ENCODE measurements at regions of chr15 and their contacts with region 1.

Region 1: GRCh38 chr15:70488002-70488605 is 275.3 kb downstream of the UACA start:
- DNase-seq: peak; percentile 61
- H3K4me3 Mint-ChIP-seq: no peak overlapping the region
- H3K27ac Mint-ChIP-seq: peak overlapping the region; percentile 77
- H3K4me1 Mint-ChIP-seq: peaks cover 97% of the 10 kb centered on the region
- H3K27me3 Mint-ChIP-seq: peaks cover 38% of the 10 kb centered on the region

Region 2: GRCh38 chr15:69468241-69469121 is 1019.6 kb before region 1 on chr15:
- intact Hi-C with region 1: loop called (anchors 1 kb)
- DNase-seq: peak; percentile 75
- H3K4me3 Mint-ChIP-seq: peak overlapping the region; percentile 61
- H3K27ac Mint-ChIP-seq: peak overlapping the region; percentile 90
- H3K4me1 Mint-ChIP-seq: peaks cover 24% of the 10 kb centered on the region
- H3K27me3 Mint-ChIP-seq: peaks cover 13% of the 10 kb centered on the region

Region 3: GRCh38 chr15:69713726-69714559 is 774.2 kb before region 1 on chr15:
- intact Hi-C with region 1: loop called (anchors 1 kb)
- DNase-seq: peak; percentile 79
- H3K4me3 Mint-ChIP-seq: peak overlapping the region; percentile 40
- H3K27ac Mint-ChIP-seq: peak overlapping the region; percentile 85
- H3K4me1 Mint-ChIP-seq: peaks cover 49% of the 10 kb centered on the region
- H3K27me3 Mint-ChIP-seq: peaks cover 19% of the 10 kb centered on the region

Region 4: GRCh38 chr15:70097337-70098169 is 390.6 kb before region 1 on chr15 and contains the start of gene TLE3:
- intact Hi-C with region 1: loop called (anchors 1 kb)
- DNase-seq: peak; percentile 97
- H3K4me3 Mint-ChIP-seq: peak within 1 kb of the TSS; percentile 98
- H3K27ac Mint-ChIP-seq: peak within 1 kb of the TSS; percentile 99
- H3K4me1 Mint-ChIP-seq: peaks cover 57% of the 10 kb centered on the region
- H3K27me3 Mint-ChIP-seq: peaks cover 19% of the 10 kb centered on the region
- total RNA-seq, gene TLE3: 123 and 126 TPM in 2 replicates

Region 5: GRCh38 chr15:70299931-70300869 is 187.9 kb before region 1 on chr15:
- intact Hi-C with region 1: loop called (anchors 1 kb)
- DNase-seq: peak; percentile 71
- H3K4me3 Mint-ChIP-seq: no peak overlapping the region
- H3K27ac Mint-ChIP-seq: peak overlapping the region; percentile 24
- H3K4me1 Mint-ChIP-seq: peaks cover 9% of the 10 kb centered on the region
- H3K27me3 Mint-ChIP-seq: peaks cover 22% of the 10 kb centered on the region

Region 6: GRCh38 chr15:70512772-70513362 is 24.8 kb after region 1 on chr15:
- intact Hi-C with region 1: loop called (anchors 1 kb)
- DNase-seq: peak; percentile 63
- H3K4me3 Mint-ChIP-seq: no peak overlapping the region
- H3K27ac Mint-ChIP-seq: no peak overlapping the region
- H3K4me1 Mint-ChIP-seq: peaks cover 23% of the 10 kb centered on the region
- H3K27me3 Mint-ChIP-seq: peaks cover 30% of the 10 kb centered on the region

Region 7: DNA sequence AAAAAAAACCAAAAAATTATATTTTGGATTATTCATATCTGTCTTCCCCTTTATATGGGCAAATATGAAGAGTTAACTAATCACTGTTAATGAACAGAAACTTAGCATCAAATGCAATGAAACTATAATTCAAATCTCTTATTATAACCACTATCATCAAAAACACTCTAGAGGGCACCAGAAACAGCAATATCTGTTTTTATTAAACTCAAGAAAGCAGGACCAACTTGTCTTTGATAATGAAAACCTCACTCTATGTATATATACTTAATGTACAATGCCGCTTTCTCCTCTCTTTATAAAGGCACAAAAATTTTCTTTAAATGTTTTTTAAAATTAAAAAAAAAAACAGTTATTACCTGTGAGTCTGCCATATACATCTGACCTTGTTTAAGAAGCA is 182.6 kb after region 1 on chr15:
- intact Hi-C with region 1: loop called (anchors 5 kb)
- DNase-seq: no peak
- H3K4me3 Mint-ChIP-seq: no peak overlapping the region
- H3K27ac Mint-ChIP-seq: no peak overlapping the region
- H3K4me1 Mint-ChIP-seq: peaks cover 11% of the 10 kb centered on the region
- H3K27me3 Mint-ChIP-seq: peaks cover 26% of the 10 kb centered on the region

Measured in activated T-helper 1 cell treated with anti-CD3 and anti-CD28 coated beads, Interleukin-12 subunit alpha, Interleukin-12 subunit beta, Interleukin-2, Interleukin-4 antibody, amounts not matched to agents 30 ng/mL and 10 ng/mL and 1 ng/mL, durations not matched to agents 14 hours and 24 hours and 36 hours (primary cell).